Activated CD4-positive, alpha-beta T cell treated with anti-CD3 and anti-CD28 coated beads, Interleukin-2, amount 10 ng/mL, durations not matched to agents 24 days and 14 days (primary cell): ENCODE measurements at regions of chr2 and their contacts with region 1.

Region 1: GRCh38 chr2:64114063-64114911 is 29.9 kb downstream of the PELI1 start:
- DNase-seq: peak; percentile 74
- H3K4me3 Mint-ChIP-seq: peak overlapping the region; percentile 66
- H3K27ac Mint-ChIP-seq: peak overlapping the region; percentile 86
- H3K4me1 Mint-ChIP-seq: peaks cover 50% of the 10 kb centered on the region
- H3K27me3 Mint-ChIP-seq: no peaks in the 10 kb centered on the region

Region 2: GRCh38 chr2:64133828-64134227 is 19.5 kb after region 1 on chr2:
- intact Hi-C with region 1: loop called (anchors 1 kb)
- DNase-seq: no peak
- H3K4me3 Mint-ChIP-seq: peak overlapping the region; percentile 60
- H3K27ac Mint-ChIP-seq: peak overlapping the region; percentile 89
- H3K4me1 Mint-ChIP-seq: peaks cover 72% of the 10 kb centered on the region
- H3K27me3 Mint-ChIP-seq: no peaks in the 10 kb centered on the region

Region 3: DNA sequence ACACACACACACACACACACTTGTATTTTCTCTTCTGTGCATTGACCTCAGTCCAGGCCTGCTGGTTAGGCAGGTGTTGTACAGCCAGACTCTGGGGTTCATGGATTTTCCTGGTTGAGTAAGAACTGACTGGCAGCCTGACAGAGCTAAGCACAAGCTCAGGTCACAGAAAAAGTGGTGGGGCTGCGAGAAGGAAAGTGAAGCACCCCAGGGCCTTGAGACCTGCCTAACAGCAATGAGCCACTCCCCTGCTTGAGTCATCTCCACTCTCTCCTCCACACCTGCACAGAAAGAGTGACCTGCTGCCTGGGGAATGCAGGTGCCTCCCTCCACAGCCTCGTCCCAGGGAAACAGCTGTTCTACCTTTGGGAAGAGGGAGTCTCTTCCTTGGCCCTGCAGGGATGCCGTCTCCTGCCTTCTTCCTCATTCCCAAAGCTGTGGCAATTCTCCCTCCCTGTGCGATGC is 248.3 kb after region 1 on chr2:
- intact Hi-C with region 1: no loop called
- DNase-seq: no peak
- H3K4me3 Mint-ChIP-seq: no peak overlapping the region
- H3K27ac Mint-ChIP-seq: no peak overlapping the region
- H3K4me1 Mint-ChIP-seq: peaks cover 10% of the 10 kb centered on the region
- H3K27me3 Mint-ChIP-seq: peaks cover 17% of the 10 kb centered on the region